PC-9 (cell line): ENCODE measurements at regions of chr6 and their contacts with region 1.

Region 1: GRCh38 chr6:85923013-85923430 is 280.3 kb upstream of the SYNCRIP start:
- DNase-seq: peak in 1 of 2 experiments; percentile 2
- H3K4me3 ChIP-seq: no peak overlapping the region
- H3K27ac ChIP-seq: no peak overlapping the region
- H3K4me1 ChIP-seq: no peaks in the 10 kb centered on the region
- H3K27me3 ChIP-seq: no peaks in the 10 kb centered on the region
- CTCF ChIP-seq: peak; percentile 64

Region 2: GRCh38 chr6:86949771-86950170 is 1026.7 kb after region 1 on chr6:
- CTCF ChIA-PET with region 1: no interaction called
- POLR2A ChIA-PET with region 1: no interaction called
- intact Hi-C with region 1: loop called (anchors 10 kb)
- DNase-seq: no peak
- H3K4me3 ChIP-seq: no peak overlapping the region
- H3K27ac ChIP-seq: no peak overlapping the region
- H3K4me1 ChIP-seq: no peaks in the 10 kb centered on the region
- H3K27me3 ChIP-seq: no peaks in the 10 kb centered on the region
- CTCF ChIP-seq: no peak

Region 3: GRCh38 chr6:87029711-87030314 is 1106.8 kb after region 1 on chr6:
- CTCF ChIA-PET with region 1: no interaction called
- POLR2A ChIA-PET with region 1: no interaction called
- intact Hi-C with region 1: loop called (anchors 1 kb)
- DNase-seq: peak in 1 of 2 experiments; percentile 3
- H3K4me3 ChIP-seq: no peak overlapping the region
- H3K27ac ChIP-seq: no peak overlapping the region
- H3K4me1 ChIP-seq: no peaks in the 10 kb centered on the region
- H3K27me3 ChIP-seq: no peaks in the 10 kb centered on the region; the same call in 1 of the 2 replicates
- CTCF ChIP-seq: peak; percentile 76